AG04450 (cell line): ENCODE measurements at regions of chr6 and their contacts with region 1.

Region 1: GRCh38 chr6:36594029-36594815 is at the start of gene SRSF3:
- DNase-seq: peak; percentile 94
- H3K4me3 ChIP-seq: peak within 1 kb of the TSS; percentile 74
- H3K27ac ChIP-seq: peak within 1 kb of the TSS; percentile 98
- H3K27me3 ChIP-seq: no peaks in the 10 kb centered on the region
- CTCF ChIP-seq: peak; percentile 52
- polyA plus RNA-seq, gene SRSF3: 317 and 423 TPM in 2 replicates

Region 2: DNA sequence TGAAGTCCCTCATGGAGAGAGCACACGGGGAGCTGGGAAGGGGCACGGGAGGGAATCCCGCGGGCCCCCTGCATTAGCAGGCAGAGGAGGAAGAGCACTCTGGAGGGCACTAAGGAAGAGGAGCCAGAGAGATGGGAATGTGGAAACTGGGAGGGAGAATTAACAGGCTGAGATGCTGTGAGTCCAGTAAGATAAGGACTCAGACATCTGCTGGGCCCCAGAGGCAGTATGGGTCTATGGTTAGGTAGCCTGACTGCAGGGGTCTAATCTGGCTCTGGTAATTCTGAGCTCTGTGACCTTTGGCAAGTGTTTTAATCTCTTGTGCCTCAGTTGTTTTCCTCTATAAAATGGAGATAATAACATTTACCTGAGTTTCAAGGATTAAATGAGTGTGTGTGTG is 15.8 kb before region 1 on chr6:
- CTCF ChIA-PET with region 1: interaction called, 5 read pairs
- POLR2A ChIA-PET with region 1: interaction called, 18 read pairs
- DNase-seq: no peak
- H3K4me3 ChIP-seq: no peak overlapping the region
- H3K27ac ChIP-seq: no peak overlapping the region
- H3K27me3 ChIP-seq: no peaks in the 10 kb centered on the region
- CTCF ChIP-seq: no peak

Region 3: DNA sequence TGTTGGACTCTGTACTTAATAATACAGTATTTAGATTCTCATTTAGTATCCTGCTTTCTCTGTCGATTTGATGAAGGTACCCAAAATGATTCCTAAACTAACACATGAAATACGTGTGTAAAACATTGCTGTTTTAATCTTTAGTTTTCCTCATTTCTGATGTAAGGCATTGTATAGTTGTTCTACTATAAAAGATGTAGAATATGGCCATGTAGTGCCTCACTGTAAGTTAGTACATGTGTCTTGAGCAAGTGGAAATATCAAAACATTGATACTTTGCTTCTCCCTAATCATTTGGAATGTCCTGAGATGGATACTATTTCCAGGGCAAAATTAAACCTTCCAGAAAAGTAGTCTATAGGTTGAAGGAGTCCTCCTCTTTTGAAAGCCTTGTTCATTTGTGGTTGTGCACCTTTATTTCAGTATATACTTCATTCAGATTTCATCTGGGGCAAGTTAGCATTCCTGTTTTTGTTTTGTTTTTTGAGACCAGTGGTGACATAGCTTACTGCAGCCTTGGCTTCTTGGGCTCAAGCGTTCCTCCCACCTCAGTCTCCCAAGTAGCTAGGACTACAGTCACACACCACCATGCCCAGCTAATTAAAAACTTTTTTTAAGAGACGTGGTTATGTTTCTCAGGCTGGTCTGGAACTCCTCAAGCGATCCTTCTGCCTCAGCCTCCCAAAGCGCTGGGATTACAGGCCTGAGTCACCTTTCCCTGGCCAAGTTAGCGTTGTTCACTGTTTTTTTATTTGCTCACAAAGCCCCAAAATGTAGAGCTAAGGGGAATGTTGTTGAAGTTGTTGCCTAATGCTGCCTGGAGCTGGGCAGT is 11.6 kb after region 1 on chr6:
- CTCF ChIA-PET with region 1: no interaction called
- POLR2A ChIA-PET with region 1: interaction called, 22 read pairs
- DNase-seq: no peak
- H3K4me3 ChIP-seq: no peak overlapping the region
- H3K27ac ChIP-seq: no peak overlapping the region
- H3K27me3 ChIP-seq: no peaks in the 10 kb centered on the region
- CTCF ChIP-seq: 0 out of 2 replicates have a peak, but pooled peaks have one; percentile 15

Region 4: GRCh38 chr6:36692220-36692619 is 98.0 kb after region 1 on chr6:
- CTCF ChIA-PET with region 1: interaction called, 11 read pairs
- POLR2A ChIA-PET with region 1: interaction called, 5 read pairs
- DNase-seq: no peak
- H3K4me3 ChIP-seq: no peak overlapping the region
- H3K27ac ChIP-seq: no peak overlapping the region
- H3K27me3 ChIP-seq: peaks cover 2% of the 10 kb centered on the region
- CTCF ChIP-seq: no peak